A549 (cell line): ENCODE measurements at regions of chr6 and their contacts with region 1.

Region 1: DNA sequence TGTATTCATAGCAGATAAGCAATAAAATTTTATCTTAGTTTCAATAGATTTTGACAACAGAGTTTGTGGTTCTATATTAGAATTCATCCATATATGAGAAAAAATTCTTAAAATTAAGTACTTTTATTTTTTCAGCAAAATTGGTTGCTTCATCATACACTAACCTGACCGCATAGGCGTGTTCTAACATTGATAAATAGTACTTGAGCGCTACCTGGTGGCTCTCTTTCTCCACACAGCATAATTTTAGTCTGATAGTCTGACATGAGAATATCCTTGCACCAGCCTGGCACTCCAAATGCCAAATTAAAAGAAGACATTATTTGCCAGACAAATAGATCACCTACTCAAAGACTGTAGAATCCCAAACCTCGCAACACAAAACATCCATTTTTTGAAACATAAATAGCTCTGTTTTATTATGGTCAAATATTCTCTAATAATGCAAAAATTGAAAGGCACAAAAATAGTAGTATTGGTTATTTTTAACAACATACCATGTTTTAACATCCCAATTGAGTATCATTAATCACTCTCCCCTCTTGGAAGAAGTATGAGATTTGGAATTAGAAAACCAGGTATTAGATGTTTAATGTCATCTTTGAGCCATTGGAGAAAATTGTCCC is 33.0 kb upstream of the FILIP1 start:
- DNase-seq: peak; percentile 21 to 77
- ATAC-seq: peak; percentile 58 to 71; a peak in 4 of 6 replicates
- H3K4me3 ChIP-seq: no peak overlapping the region
- H3K27ac ChIP-seq: peak overlapping the region; percentile 77 to 84; a peak in 5 of 6 replicates
- H3K4me1 ChIP-seq: peaks cover 25% of the 10 kb centered on the region
- CTCF ChIP-seq: peak; percentile 70
- EP300 ChIP-seq: no peak
- POLR2A ChIP-seq: no peak
- RAD21 ChIP-seq: peak; percentile 94 to 95

Region 2: GRCh38 chr6:75296811-75297779 is 229.5 kb before region 1 on chr6:
- CTCF ChIA-PET with region 1: interaction called, 15 read pairs
- POLR2A ChIA-PET with region 1: interaction called, 4 read pairs
- DNase-seq: peak in 1 of 2 experiments; percentile 71
- ATAC-seq: peak in 1 of 2 experiments; percentile 61; a peak in 3 of 6 replicates
- H3K4me3 ChIP-seq: no peak overlapping the region
- H3K27ac ChIP-seq: peak overlapping the region in 1 of 2 experiments; percentile 18; a peak in 1 of 6 replicates
- H3K4me1 ChIP-seq: peaks cover 19% of the 10 kb centered on the region; the same call in 1 of the 3 replicates
- CTCF ChIP-seq: peak; percentile 70
- EP300 ChIP-seq: no peak
- POLR2A ChIP-seq: no peak
- RAD21 ChIP-seq: peak; percentile 82 to 87

Region 3: DNA sequence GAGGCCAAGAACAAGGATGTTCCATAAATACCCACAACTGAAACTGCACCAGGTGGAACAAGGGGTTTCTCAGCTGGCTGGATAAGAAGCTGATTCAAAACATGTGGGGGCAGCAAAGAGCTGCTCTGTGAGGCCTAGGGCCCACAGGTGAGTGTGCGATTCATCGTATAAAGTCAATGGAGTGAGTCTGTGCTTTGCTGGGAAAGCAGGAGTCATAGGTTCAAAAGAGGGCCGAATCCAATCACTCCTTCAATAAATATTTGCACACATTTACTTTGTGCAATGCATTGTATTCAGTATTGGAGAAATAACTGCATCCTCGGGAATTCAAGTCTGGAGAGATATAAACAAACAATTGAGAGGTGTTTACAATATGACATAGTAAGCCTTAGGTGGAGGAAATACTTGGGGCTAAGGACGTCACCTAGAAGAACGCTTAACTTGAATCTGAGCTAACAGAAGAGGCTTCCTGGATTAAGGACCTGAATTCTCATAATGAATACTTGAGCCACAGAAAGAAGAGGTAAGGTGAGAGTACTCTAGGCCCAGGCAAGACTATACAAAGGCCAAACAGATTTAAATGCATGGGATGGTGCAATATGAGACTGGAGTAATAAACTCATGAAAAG is 158.3 kb before region 1 on chr6:
- CTCF ChIA-PET with region 1: interaction called, 42 read pairs
- POLR2A ChIA-PET with region 1: interaction called, 11 read pairs
- DNase-seq: peak; percentile 55 to 96
- ATAC-seq: peak; percentile 94 to 97
- H3K4me3 ChIP-seq: no peak overlapping the region
- H3K27ac ChIP-seq: peak overlapping the region; percentile 88 to 92
- H3K4me1 ChIP-seq: peaks cover 65% of the 10 kb centered on the region
- CTCF ChIP-seq: peak; percentile 70
- EP300 ChIP-seq: peak; percentile 97; a peak in 4 of 5 replicates
- POLR2A ChIP-seq: no peak
- RAD21 ChIP-seq: peak; percentile 93 to 96